ENCODE measurements at regions of chr13 and their contacts with region 1.

Region 1: DNA sequence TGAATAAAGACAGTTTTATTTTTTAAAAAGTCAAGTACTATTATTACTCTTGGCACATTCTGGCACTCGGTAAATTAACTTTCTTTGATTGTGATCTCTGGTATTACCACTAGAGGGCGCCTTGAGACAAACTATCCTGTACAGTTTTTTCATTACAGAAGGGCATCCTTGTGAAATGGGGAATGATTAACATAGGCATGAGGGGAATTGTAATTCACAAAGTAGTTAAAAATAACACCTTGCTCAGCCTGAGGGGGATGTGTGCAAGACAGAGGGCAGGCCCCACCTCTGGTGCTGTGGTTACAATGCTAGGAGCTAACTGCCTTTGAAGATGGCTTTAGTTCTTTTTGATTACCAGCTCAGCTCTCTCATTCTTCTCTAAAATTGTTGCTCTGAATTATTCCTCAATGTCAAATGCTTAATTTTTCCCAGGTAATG is 24.2 kb upstream of the C1QTNF9B start:
- DNase-seq: peak in 1 of 2 donors; percentile 17
- ATAC-seq: peak in 7 of 8 donors; percentile 19 to 61 (median 45)
- H3K4me3 ChIP-seq: no peak overlapping the region
- H3K27ac ChIP-seq: no peak overlapping the region
- H3K4me1 ChIP-seq: no peaks in the 10 kb centered on the region
- H3K27me3 ChIP-seq: peaks cover 0 to 13% (median 6%) of the 10 kb centered on the region in 7 donors
- CTCF ChIP-seq: peak; percentile 62 to 78 (median 76)

Region 2: DNA sequence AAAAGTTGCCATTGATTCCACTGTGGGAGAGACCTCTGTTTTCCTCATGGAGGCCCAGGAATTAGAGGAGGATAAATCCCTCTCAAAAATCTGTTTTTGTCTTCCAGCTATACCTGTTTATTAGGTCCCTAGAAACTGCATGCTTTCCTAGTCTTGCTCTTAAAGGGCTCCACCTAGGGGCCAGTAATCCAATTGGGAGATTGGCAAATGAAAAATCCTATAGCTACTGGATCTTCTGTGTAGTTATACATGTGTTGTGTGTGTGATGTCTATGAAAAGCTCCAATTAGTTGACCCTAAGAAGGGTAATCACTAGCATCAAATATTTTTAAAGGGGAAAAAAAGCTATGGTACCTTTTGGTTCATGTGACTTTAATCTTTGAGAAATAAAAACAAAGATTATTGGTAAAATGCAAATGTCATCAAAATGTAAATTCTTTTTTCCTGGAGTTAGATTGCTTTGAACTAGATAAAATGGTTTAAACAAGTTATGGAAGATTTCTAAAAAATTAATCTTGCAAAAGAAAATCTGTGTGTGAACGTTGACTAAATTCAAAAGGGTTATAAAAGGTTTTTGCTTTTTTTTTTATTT is 39.2 kb after region 1 on chr13:
- intact Hi-C with region 1: loop called in 2 of 10 experiments (anchors 2 to 5 kb)
- DNase-seq: no peak
- ATAC-seq: no peak
- H3K4me3 ChIP-seq: no peak overlapping the region
- H3K27ac ChIP-seq: no peak overlapping the region
- H3K4me1 ChIP-seq: peaks cover 0 to 16% (median 0%) of the 10 kb centered on the region in 9 donors
- H3K27me3 ChIP-seq: no peaks in the 10 kb centered on the region
- CTCF ChIP-seq: peak; percentile 18 to 72 (median 65)

Region 3: GRCh38 chr13:24005755-24006281 is 84.3 kb after region 1 on chr13:
- intact Hi-C with region 1: loop called in 2 of 10 experiments (anchors 10 kb)
- DNase-seq: no peak
- ATAC-seq: no peak
- H3K4me3 ChIP-seq: no peak overlapping the region
- H3K27ac ChIP-seq: no peak overlapping the region
- H3K4me1 ChIP-seq: no peaks in the 10 kb centered on the region
- H3K27me3 ChIP-seq: no peaks in the 10 kb centered on the region
- CTCF ChIP-seq: no peak

Region 4: GRCh38 chr13:24012648-24013047 is 91.2 kb after region 1 on chr13:
- intact Hi-C with region 1: loop called in 2 of 10 experiments (anchors 10 kb)
- DNase-seq: no peak
- ATAC-seq: no peak
- H3K4me3 ChIP-seq: no peak overlapping the region
- H3K27ac ChIP-seq: no peak overlapping the region
- H3K4me1 ChIP-seq: peaks cover 0 to 13% (median 0%) of the 10 kb centered on the region in 9 donors
- H3K27me3 ChIP-seq: no peaks in the 10 kb centered on the region
- CTCF ChIP-seq: no peak

Region 5: DNA sequence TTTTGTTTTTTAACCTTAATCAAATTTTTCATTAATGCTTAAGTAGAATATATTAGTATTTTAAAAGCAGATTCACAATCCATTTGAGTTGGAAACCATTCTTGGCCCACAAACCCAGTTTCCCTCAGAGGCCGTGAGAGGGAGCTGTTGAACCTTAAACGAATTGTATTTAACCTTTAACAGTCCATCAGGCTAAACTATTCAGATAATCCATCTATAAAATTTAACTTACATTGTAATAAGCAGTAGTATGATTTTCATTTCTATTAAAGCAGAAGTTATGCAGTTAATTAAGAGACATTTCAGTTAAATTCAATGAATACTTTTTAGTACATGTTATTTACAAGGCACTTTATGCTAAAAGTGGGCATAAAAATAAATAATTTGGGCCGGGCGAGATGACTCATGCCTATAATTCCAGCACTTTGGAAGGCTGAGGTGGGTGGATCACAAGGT is 98.9 kb after region 1 on chr13:
- intact Hi-C with region 1: loop called in 2 of 10 experiments (anchors 5 to 10 kb)
- DNase-seq: peak in 1 of 2 donors; percentile 54
- ATAC-seq: peak in 6 of 8 donors; percentile 45 to 65 (median 60)
- H3K4me3 ChIP-seq: no peak overlapping the region
- H3K27ac ChIP-seq: no peak overlapping the region
- H3K4me1 ChIP-seq: peaks cover 0 to 16% (median 2%) of the 10 kb centered on the region in 9 donors
- H3K27me3 ChIP-seq: no peaks in the 10 kb centered on the region
- CTCF ChIP-seq: peak; percentile 51 to 89 (median 78)

Measured in heart right ventricle (tissue), 16 donors.